ENCODE measurements at regions of chrX and their contacts with region 1.

Region 1: GRCh38 chrX:27555514-27555913 is 34.6 kb upstream of the DCAF8L2 start:
- DNase-seq: no peak
- ATAC-seq: no peak
- H3K4me3 ChIP-seq: no peak overlapping the region
- H3K27ac ChIP-seq: no peak overlapping the region
- H3K4me1 ChIP-seq: no peaks in the 10 kb centered on the region
- H3K27me3 ChIP-seq: no peaks in the 10 kb centered on the region
- CTCF ChIP-seq: peak; percentile 9 to 62 (median 44)

Region 2: GRCh38 chrX:27680726-27681125 is 125.2 kb after region 1 on chrX:
- intact Hi-C with region 1: loop called in 1 of 10 experiments (anchors 10 kb)
- DNase-seq: no peak
- ATAC-seq: no peak
- H3K4me3 ChIP-seq: no peak overlapping the region
- H3K27ac ChIP-seq: no peak overlapping the region
- H3K4me1 ChIP-seq: no peaks in the 10 kb centered on the region
- H3K27me3 ChIP-seq: no peaks in the 10 kb centered on the region
- CTCF ChIP-seq: no peak